WTC11 (cell line): ENCODE measurements at regions of chr12 and their contacts with region 1.

Region 1: DNA sequence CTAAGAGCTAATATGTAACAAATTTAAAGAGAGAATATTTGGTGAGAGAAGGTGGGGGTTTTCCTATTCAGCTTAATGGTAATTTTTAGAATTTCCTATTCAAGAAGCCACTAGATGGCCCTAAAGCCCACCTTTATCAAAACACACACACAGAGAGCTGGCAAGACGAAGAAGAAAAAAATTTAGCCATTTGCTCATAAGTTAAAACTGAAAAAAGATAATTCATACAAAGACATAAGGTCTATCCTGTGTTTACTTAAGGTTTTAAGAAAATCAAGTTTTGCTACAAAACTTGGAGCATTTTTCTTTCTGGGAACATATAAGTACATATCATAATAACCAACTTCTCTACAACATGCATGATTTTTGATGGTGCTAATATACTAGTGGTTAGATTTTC is 46.8 kb upstream of the PCED1B start:
- DNase-seq: no peak
- ATAC-seq: peak; percentile 66
- H3K4me3 Mint-ChIP-seq: no peak overlapping the region
- H3K27ac Mint-ChIP-seq: no peak overlapping the region
- H3K4me1 Mint-ChIP-seq: peaks cover 30% of the 10 kb centered on the region
- H3K27me3 Mint-ChIP-seq: no peaks in the 10 kb centered on the region
- CTCF ChIP-seq: peak; percentile 28; the same call in 1 of the 2 replicates

Region 2: DNA sequence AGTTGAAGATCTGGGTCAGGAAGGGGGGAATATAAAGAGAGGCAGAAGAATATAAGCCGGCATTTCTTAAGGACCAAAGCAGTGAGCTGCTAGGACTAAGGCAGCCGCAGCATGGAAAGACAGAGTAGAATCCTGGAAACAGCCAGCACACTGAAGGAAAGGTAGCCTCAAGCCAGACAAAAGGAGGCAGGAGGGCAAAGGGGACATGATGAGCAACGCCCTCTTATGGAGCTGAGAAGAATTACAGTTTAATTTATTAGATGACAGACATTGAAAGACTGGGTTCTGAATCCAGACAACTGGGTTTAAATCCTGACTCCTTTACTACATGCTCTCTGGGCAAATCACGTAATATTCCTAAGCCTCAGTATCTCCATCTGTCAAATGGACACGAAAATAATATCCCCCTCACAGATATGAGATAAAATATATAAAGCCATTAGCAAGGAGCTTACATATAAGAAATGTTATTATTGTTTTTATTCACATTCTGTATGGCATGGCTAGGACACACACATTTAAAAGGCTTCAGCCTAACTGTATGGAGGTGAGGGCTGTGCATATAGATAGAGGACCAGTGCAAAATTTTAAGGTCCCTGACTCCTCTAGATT is 38.7 kb after region 1 on chr12:
- CTCF ChIA-PET with region 1: interaction called, 64 read pairs
- POLR2A ChIA-PET with region 1: no interaction called
- DNase-seq: peak; percentile 22
- ATAC-seq: peak; percentile 74
- H3K4me3 Mint-ChIP-seq: no peak overlapping the region
- H3K27ac Mint-ChIP-seq: no peak overlapping the region
- H3K4me1 Mint-ChIP-seq: peaks cover 41% of the 10 kb centered on the region
- H3K27me3 Mint-ChIP-seq: no peaks in the 10 kb centered on the region
- CTCF ChIP-seq: peak; percentile 57

Region 3: GRCh38 chr12:47194501-47194900 is 161.9 kb after region 1 on chr12:
- CTCF ChIA-PET with region 1: interaction called, 13 read pairs
- POLR2A ChIA-PET with region 1: no interaction called
- DNase-seq: no peak
- ATAC-seq: no peak
- H3K4me3 Mint-ChIP-seq: no peak overlapping the region
- H3K27ac Mint-ChIP-seq: no peak overlapping the region; the same call in 1 of the 2 replicates
- H3K4me1 Mint-ChIP-seq: peaks cover 50% of the 10 kb centered on the region
- H3K27me3 Mint-ChIP-seq: no peaks in the 10 kb centered on the region
- CTCF ChIP-seq: no peak

Region 4: DNA sequence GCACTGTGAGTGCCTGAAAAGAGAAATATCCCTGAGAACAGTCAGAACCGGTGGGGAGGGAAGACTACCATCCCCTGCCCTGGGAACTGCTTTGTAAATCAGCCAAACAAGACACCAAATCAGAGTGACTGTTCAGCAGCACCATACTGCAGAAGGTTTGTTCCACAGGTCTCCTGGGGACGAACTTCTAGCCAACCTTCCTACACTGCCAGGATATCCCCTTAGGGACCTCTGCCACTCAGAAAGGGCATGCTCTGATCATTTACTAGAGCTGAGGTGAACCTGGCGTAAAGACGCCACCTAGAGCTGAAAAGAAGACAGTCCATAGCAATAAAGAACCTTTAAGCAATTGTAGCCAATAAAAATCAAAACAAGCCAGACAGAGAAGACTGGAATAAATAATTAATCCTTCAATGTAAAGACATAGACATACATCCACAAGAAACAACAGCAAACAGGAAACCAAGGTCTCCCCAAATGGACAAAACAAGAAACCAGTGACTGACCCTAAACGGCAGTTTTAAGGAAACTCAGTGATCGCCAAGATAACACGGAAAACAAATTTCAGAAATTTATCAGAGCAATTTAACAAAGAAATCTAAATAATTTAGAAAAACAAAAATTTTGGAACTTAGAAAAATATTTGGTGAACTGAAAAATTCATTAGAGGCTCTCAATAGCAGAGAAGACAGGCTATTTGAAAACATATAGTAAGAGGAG is 275.2 kb after region 1 on chr12:
- CTCF ChIA-PET with region 1: interaction called, 13 read pairs
- POLR2A ChIA-PET with region 1: no interaction called
- DNase-seq: peak; percentile 36
- ATAC-seq: peak; percentile 99
- H3K4me3 Mint-ChIP-seq: no peak overlapping the region
- H3K27ac Mint-ChIP-seq: no peak overlapping the region
- H3K4me1 Mint-ChIP-seq: peaks cover 12% of the 10 kb centered on the region
- H3K27me3 Mint-ChIP-seq: peaks cover 3% of the 10 kb centered on the region; the same call in 1 of the 2 replicates
- CTCF ChIP-seq: peak; percentile 43; the same call in 1 of the 2 replicates

Region 5: DNA sequence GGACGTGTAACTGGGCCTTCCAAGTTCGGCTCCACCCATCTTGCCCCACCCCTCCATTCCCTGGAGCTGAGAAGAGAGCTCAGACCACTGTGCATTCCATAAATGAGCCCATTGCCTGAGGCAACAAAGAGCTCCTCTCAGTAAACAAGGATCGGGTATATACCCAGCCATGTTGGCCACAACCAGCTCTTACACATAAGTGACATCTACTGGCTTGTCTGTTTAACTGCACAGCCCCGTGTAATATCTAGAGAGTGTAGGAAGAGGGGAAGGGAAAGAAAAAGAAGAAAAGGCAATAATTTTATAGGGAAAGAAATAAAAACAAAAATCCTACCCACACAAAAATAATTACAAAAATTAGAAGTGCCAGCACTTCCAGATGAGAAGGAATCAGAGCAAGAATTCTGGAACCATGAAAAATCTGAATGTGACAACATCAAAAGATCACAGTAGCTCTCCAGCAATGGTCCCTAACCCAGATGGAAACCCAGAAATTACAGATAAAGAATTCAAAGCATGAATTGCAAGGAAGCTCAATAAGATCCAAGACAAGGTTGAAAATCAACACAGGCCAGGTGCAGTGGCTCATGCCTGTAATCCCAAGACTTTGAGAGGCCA is 365.1 kb after region 1 on chr12:
- CTCF ChIA-PET with region 1: interaction called, 49 read pairs
- POLR2A ChIA-PET with region 1: no interaction called
- DNase-seq: no peak
- ATAC-seq: peak; percentile 92
- H3K4me3 Mint-ChIP-seq: no peak overlapping the region
- H3K27ac Mint-ChIP-seq: no peak overlapping the region
- H3K4me1 Mint-ChIP-seq: peaks cover 16% of the 10 kb centered on the region
- H3K27me3 Mint-ChIP-seq: no peaks in the 10 kb centered on the region
- CTCF ChIP-seq: no peak

Region 6: DNA sequence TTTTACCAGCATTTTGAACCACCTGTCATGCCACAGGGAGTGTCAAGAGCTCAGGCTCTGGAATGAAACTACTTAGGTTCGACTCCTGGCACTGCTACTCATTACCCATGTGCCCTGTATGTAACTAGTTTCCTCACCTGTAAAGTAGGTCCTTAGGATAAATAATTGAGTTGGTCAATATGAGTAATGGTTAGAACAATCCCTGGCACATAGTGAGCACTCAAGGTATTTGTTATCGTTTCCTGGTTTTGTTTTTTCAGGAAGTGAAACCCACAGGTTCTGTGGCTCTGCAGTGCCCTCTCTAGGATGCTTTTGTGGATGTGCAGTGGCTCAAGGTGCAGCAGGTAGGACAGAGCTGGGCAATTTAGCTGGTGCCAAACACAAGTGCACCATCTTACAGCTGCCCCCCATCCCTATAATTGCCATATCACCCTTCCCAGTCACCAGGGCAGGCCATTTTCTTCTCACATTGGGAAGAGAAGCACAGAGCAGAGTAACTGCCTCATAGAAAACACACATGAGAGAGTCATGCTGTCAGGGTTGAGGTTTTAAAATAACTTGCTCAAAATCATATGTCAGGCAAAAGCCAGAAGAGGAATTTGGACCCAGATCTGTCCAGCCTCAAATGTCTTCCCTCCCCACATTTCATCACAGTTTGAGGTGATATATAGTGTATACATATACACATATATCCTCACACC is 375.7 kb after region 1 on chr12:
- CTCF ChIA-PET with region 1: interaction called, 53 read pairs
- POLR2A ChIA-PET with region 1: no interaction called
- DNase-seq: peak; percentile 34
- ATAC-seq: peak; percentile 89
- H3K4me3 Mint-ChIP-seq: no peak overlapping the region
- H3K27ac Mint-ChIP-seq: no peak overlapping the region
- H3K4me1 Mint-ChIP-seq: no peaks in the 10 kb centered on the region
- H3K27me3 Mint-ChIP-seq: no peaks in the 10 kb centered on the region; the same call in 1 of the 2 replicates
- CTCF ChIP-seq: no peak